ENCODE measurements at regions of chr18 and their contacts with region 1.

Region 1: GRCh38 chr18:48538531-48539405 is at the start of gene CTIF:
- DNase-seq: peak; percentile 96 to 99 (median 98)
- H3K4me3 ChIP-seq: peak within 1 kb of the TSS; percentile 59 to 97 (median 80)
- H3K27ac ChIP-seq: peak within 1 kb of the TSS; percentile 46 to 94 (median 83)
- H3K4me1 ChIP-seq: peaks cover 5 to 46% of the 10 kb centered on the region in 2 donors
- H3K27me3 ChIP-seq: no peaks in the 10 kb centered on the region
- CTCF ChIP-seq: no peak
- POLR2A ChIP-seq: peak; percentile 37 to 80
- total RNA-seq, gene CTIF: 20.5 to 98.7 (median 46.5) TPM

Region 2: DNA sequence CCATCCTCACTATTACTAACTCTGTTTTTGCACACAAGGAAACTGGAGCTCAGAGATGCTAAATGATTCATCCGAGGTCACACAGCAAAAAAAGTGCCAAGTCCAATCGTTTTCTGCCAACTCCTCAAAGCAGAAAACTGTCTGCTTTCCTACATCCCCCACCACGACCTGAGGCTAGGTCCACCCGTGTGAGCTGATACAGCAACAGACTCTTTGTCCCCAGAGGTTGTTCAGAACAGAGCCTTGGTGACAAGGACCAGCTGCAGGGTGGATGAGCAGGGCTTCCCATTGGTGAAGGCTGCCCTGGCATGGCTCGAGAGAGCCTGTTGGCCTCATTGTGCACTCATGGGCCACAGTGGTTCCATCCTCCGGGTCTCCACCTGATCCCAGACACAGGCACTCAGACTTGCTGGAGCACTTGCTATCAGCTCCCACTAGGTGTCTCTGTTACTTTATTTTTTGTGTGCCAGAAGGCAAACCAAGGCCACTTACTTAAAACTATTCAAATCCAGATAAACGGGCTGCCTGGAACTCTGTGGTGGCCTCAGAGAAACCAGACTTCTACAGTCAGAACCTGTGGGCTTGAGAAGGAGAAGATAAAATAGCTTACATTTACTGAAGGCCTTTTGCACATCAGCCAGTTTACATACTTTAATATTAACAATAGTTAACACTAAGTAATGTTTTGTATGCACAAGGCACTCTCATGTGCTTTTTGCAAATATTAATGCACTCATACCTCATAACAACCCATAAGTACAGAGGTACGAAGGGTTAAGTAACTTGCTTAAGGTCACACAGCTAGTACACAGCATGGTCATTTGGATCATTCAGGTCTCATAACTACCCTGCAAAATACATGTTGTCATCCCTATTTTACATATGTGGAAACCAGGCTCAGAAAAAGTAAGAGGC is 62.9 kb before region 1 on chr18:
- intact Hi-C with region 1: loop called in 1 of 2 experiments (anchors 10 kb)
- DNase-seq: peak; percentile 59 to 86 (median 65)
- H3K4me3 ChIP-seq: no peak overlapping the region
- H3K27ac ChIP-seq: no peak overlapping the region
- H3K4me1 ChIP-seq: peaks cover 0 to 7% of the 10 kb centered on the region in 2 donors
- H3K27me3 ChIP-seq: no peaks in the 10 kb centered on the region
- CTCF ChIP-seq: peak; percentile 78 to 92 (median 90)
- POLR2A ChIP-seq: no peak

Measured in adrenal gland (tissue), 19 donors.